ENCODE measurements at regions of chr17 and their contacts with region 1.

Region 1: GRCh38 chr17:2054512-2055291 is at the start of gene HIC1:
- DNase-seq: peak; percentile 73 to 96 (median 84)
- ATAC-seq: peak; percentile 71
- H3K4me3 ChIP-seq: peak within 1 kb of the TSS; percentile 56 to 57
- H3K27ac ChIP-seq: peak within 1 kb of the TSS; percentile 81 to 82
- H3K4me1 ChIP-seq: peaks cover 33 to 84% of the 10 kb centered on the region in 2 donors
- H3K27me3 ChIP-seq: peaks cover 13 to 86% of the 10 kb centered on the region in 2 donors
- CTCF ChIP-seq: peak; percentile 97 to 99
- polyA plus RNA-seq, gene HIC1: 17.4 to 37.5 (median 22.5) TPM

Region 2: GRCh38 chr17:2111719-2112118 is 57.0 kb after region 1 on chr17:
- intact Hi-C with region 1: no loop called
- DNase-seq: peak in 2 of 4 donors; percentile 66 to 88
- ATAC-seq: peak; percentile 91
- H3K4me3 ChIP-seq: no peak overlapping the region
- H3K27ac ChIP-seq: no peak overlapping the region
- H3K4me1 ChIP-seq: peaks cover 0 to 14% of the 10 kb centered on the region in 2 donors
- H3K27me3 ChIP-seq: no peaks in the 10 kb centered on the region
- CTCF ChIP-seq: no peak

Region 3: GRCh38 chr17:2244545-2245525 is 190.1 kb after region 1 on chr17:
- intact Hi-C with region 1: loop called in 1 of 2 experiments (anchors 5 kb)
- DNase-seq: peak; percentile 75 to 95 (median 89)
- ATAC-seq: peak; percentile 97
- H3K4me3 ChIP-seq: no peak overlapping the region
- H3K27ac ChIP-seq: peak overlapping the region; percentile 53 to 69
- H3K4me1 ChIP-seq: peaks cover 0 to 10% of the 10 kb centered on the region in 2 donors
- H3K27me3 ChIP-seq: no peaks in the 10 kb centered on the region
- CTCF ChIP-seq: peak; percentile 96 to 98

Measured in left lung (tissue), 14 donors.